ENCODE measurements at regions of chr4 and their contacts with region 1.

Region 1: DNA sequence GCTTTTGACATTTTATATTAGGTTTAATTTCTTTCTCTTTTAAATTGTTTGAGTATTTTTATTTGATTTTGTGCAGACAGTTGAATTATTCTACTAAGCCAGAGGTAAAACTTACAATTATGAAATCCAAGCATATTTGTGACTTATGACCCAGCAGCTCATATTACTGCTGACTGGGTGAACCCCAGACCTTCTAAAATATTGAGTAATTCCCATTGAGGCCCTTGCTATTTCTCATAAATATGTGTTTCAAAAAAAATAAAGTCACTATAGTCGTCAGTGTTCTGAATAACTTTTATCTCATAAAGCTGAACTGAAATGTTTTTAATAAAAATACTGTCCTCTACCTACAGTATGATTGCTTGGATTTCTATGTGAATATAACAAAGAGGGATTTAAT is 303.1 kb downstream of the IQCM start:
- DNase-seq: no peak

Region 2: GRCh38 chr4:150108691-150109090 is 596.2 kb after region 1 on chr4:
- intact Hi-C with region 1: loop called in 1 of 2 experiments (anchors 5 kb)
- DNase-seq: no peak